Activated naive CD4-positive, alpha-beta T cell treated with anti-CD3 and anti-CD28 coated beads for 36 hours (primary cell): ENCODE measurements at regions of chr2 and their contacts with region 1.

Region 1: DNA sequence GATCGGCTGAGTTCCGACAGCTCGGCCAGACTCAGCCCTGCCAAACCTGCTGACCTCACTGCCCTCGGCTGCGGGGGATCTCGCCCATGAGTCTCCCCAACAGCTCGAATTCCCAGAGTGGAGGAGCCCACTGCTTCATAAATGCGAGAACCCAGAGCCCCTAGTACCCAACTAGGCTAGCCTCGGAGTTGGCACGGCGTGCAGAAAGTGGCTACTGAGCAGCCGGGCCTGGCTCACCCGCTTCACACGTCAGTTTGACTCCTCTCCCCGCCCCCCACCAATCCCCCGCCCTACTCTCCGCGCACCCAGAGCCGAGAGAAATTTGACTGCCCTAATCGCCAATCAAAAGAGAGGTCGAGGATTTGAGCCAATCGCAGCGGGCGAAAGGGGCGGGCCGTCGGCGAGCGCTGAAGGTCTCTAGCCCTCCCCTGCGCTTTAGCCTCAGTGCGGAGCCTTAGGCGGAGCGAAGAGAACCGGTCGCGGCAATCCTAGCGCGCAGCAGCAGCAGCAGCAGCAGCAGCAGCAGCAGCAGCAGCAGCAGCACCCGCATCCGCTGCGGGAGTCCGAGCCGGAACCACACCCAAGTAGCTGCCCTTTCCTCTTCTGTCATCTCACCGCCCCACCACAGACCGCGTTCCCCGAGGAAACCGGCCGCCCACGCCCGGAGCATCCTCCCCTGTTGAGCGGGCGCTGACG is at the start of gene GLS:
- DNase-seq: peak; percentile 98
- H3K4me3 Mint-ChIP-seq: peak within 1 kb of the TSS; percentile 96
- H3K27ac Mint-ChIP-seq: peak within 1 kb of the TSS; percentile 99
- H3K4me1 Mint-ChIP-seq: peaks cover 42% of the 10 kb centered on the region
- H3K27me3 Mint-ChIP-seq: no peaks in the 10 kb centered on the region
- total RNA-seq, gene GLS: 248 to 255 TPM

Region 2: DNA sequence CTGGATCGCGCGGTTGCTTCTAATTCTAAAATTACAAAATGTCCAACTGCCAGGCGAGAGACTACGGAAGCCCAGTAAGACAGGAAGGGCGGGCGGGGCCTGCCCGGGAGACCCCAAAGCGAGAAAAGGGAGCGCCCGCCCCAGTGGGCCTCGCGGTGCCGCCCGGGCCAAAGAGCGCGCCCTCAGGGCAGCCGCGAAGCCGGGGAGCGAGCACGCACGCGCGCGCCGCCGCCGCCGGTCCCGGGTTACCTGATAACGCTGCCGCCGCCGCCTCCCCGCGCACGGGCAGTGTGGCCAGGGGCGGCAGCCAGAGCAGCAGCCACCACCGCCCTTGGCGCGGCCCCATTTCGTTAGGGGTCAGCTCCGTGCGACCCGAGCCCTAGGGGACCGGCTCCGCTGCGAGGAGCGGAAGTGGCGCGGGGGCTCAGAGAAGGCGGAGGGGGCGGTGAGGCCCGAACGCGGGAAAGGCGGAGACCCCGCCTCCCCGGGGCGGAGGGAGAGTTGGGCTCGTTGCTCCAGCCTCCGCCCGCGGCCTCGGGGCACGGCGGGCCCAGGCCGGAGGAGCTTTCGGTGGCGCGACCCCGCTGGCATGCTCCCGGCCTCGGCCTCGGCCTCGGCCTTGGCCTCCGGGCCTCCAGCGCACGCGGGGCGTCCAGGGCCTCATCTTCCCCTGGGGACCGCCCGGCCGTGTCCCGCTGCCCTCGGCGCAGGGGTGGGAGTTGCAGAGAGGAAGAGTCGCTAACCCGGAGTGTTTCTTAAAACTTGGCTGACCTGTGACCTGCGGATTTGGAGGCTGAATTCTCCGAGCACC is 346.0 kb before region 1 on chr2 and contains the start of gene NEMP2:
- CTCF ChIA-PET with region 1: no interaction called
- intact Hi-C with region 1: loop called (anchors 1 kb)
- DNase-seq: peak; percentile 82
- H3K4me3 Mint-ChIP-seq: peak within 1 kb of the TSS; percentile 96
- H3K27ac Mint-ChIP-seq: peak within 1 kb of the TSS; percentile 100
- H3K4me1 Mint-ChIP-seq: peaks cover 51% of the 10 kb centered on the region
- H3K27me3 Mint-ChIP-seq: no peaks in the 10 kb centered on the region
- total RNA-seq, gene NEMP2: 32.9 to 34.2 TPM

Region 3: GRCh38 chr2:190781604-190782198 is 98.8 kb before region 1 on chr2:
- CTCF ChIA-PET with region 1: interaction called, 4 read pairs
- intact Hi-C with region 1: loop called (anchors 2 kb)
- DNase-seq: peak; percentile 77
- H3K4me3 Mint-ChIP-seq: no peak overlapping the region
- H3K27ac Mint-ChIP-seq: no peak overlapping the region
- H3K4me1 Mint-ChIP-seq: peaks cover 26% of the 10 kb centered on the region
- H3K27me3 Mint-ChIP-seq: no peaks in the 10 kb centered on the region

Region 4: GRCh38 chr2:190863946-190864345 is 16.6 kb before region 1 on chr2:
- CTCF ChIA-PET with region 1: interaction called, 6 read pairs
- intact Hi-C with region 1: loop called (anchors 1 kb)
- DNase-seq: no peak
- H3K4me3 Mint-ChIP-seq: no peak overlapping the region
- H3K27ac Mint-ChIP-seq: no peak overlapping the region
- H3K4me1 Mint-ChIP-seq: peaks cover 26% of the 10 kb centered on the region
- H3K27me3 Mint-ChIP-seq: no peaks in the 10 kb centered on the region

Region 5: DNA sequence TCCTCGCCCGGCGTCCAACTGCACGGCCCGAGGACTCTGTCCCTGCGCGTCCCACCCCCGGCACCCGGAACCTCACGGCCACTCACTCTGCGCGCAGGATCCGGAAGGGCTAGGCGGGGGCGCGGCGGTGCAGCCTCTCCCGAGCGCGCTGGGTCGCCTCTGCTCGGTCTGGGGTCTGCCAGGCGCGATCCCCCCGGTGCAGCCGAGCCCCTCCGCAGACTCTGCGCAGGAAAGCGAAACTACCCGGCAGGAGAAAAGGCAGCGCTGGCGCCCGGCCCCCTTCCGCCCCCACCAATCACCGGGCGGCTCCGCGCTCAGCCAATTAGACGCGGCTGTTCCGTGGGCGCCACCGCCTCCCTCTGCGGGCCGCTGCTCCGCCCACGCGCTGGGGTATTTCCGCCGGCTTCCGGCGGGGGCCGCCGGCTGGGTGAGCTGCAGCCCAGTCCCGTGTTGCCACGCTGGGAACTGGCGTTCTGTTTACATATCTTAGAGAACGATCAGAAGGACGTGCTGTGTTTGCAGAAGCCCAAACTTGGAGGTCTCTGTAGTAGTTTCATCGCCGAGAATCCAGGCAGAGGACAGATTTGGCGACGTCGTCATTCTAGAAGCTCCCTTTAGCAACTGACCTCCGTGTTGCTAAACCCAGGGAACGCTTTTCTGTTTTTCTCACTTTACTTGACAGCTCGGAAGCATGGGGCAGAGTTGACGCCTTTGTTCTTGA is 133.6 kb after region 1 on chr2 and contains the start of gene STAT1:
- CTCF ChIA-PET with region 1: interaction called, 5 read pairs
- intact Hi-C with region 1: loop called (anchors 1 kb)
- DNase-seq: peak; percentile 95
- H3K4me3 Mint-ChIP-seq: no peak within 1 kb of the TSS
- H3K27ac Mint-ChIP-seq: no peak within 1 kb of the TSS
- H3K4me1 Mint-ChIP-seq: peaks cover 39% of the 10 kb centered on the region
- H3K27me3 Mint-ChIP-seq: no peaks in the 10 kb centered on the region
- total RNA-seq, gene STAT1: 376 to 402 TPM

Region 6: DNA sequence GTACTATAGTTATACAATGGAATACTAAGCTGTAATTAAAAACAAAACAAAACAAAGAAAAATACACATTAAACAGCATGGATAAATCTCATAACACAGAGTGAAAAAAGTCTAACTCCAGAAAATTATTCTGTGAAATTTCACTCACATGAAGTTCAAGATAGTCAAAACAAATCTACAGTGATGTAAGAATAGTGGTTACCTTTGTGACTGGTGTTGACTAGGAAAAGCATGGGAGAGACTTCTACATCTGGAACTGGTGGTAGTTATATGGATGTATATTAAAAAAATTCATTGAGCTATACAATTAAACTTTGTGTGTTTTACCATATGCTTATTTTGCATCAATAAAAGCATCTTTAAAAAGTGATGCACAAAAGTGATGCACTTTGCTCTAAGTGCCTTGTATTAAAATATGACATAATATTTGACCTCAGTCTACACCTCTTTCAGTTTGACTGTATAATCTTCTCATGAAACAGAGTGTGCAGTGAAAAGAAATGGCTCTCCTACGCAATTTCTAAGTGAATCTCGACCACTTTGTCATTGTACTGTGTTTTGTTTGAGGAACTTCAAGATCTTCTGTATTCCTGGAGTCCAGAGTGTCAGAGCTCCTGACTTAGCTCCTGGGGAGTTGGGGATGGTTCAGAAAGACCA is 242.2 kb after region 1 on chr2:
- CTCF ChIA-PET with region 1: no interaction called
- intact Hi-C with region 1: no loop called
- DNase-seq: no peak
- H3K4me3 Mint-ChIP-seq: no peak overlapping the region
- H3K27ac Mint-ChIP-seq: peak overlapping the region; percentile 26
- H3K4me1 Mint-ChIP-seq: peaks cover 58% of the 10 kb centered on the region
- H3K27me3 Mint-ChIP-seq: no peaks in the 10 kb centered on the region

Region 7: DNA sequence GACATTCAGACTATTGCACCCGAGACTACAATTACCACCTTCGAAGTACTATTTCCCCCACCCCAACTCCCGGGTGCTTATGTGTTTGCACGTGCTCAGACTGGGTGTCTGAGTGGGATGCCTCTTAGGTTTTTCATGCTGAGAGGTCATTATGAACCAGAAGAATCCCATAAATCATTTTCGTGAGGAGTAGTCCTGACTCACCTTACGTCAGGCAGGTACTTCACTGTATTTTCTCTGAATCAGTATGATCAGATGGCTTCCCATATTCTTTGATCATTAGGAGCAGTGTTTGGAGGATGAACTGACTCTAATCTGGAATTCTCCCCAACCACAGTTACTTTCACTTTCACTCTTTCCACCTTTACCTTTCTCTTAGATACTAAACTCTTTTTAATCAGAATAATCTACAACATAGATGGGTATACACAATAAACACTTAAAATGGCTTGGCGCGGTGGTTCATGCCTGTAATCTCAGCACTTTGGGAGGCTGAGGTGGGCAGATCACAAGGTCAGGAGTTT is 308.6 kb after region 1 on chr2:
- CTCF ChIA-PET with region 1: no interaction called
- intact Hi-C with region 1: loop called (anchors 1 kb)
- DNase-seq: no peak
- H3K4me3 Mint-ChIP-seq: no peak overlapping the region
- H3K27ac Mint-ChIP-seq: peak overlapping the region; percentile 68
- H3K4me1 Mint-ChIP-seq: peaks cover 73% of the 10 kb centered on the region
- H3K27me3 Mint-ChIP-seq: no peaks in the 10 kb centered on the region